Sigmoid colon (tissue), 7 donors: ENCODE measurements at regions of chrX and their contacts with region 1.

Region 1: DNA sequence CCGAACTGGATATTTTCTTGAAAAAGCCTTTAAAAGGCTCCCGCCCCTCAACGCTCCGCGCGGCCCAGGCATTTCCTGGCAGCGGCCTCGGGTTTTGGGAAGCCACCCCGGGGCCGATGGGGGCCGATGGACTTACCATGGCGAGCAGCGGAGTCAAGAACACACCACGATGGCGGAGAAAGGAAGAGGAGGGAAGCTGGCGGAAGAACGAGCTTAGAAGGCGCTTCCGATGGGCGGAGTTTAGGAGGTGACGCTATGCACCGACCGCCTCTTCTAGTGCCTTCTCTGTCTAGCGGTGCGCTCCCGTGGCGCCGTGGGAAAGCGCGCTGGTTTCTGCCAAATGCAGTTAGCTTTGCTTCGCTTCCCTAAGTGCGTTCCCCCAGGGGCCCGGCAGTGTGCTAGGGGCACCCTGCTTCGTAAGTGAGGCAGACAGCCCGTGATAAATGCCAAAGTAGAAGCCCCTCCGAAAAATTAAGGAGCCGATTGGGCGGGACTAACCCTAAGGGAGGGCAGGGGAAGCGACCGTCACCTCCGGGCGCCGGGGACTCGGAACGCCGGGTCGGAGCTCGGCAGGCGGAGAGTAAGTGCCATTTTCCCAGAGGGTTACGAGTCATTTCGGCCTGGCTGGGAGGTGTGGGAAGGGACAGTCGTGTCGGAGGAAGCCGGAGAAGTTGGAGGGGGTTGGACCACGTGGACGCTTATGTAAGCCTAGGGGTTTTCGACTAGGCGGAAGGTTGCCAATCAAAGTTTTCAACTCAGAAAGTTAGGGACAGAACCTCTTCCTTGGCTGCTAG is at the start of gene RPL39:
- DNase-seq: peak; percentile 92
- H3K4me3 ChIP-seq: peak within 1 kb of the TSS; percentile 54 to 66 (median 62)
- H3K27ac ChIP-seq: peak within 1 kb of the TSS; percentile 87 to 92 (median 90)
- H3K4me1 ChIP-seq: peaks cover 0 to 37% (median 14%) of the 10 kb centered on the region in 4 donors
- H3K27me3 ChIP-seq: no peaks in the 10 kb centered on the region
- CTCF ChIP-seq: no peak
- EP300 ChIP-seq: no peak
- POLR2A ChIP-seq: peak; percentile 29 to 37
- total RNA-seq, gene RPL39: 1,495 to 7,662 (median 5,013) TPM

Region 2: DNA sequence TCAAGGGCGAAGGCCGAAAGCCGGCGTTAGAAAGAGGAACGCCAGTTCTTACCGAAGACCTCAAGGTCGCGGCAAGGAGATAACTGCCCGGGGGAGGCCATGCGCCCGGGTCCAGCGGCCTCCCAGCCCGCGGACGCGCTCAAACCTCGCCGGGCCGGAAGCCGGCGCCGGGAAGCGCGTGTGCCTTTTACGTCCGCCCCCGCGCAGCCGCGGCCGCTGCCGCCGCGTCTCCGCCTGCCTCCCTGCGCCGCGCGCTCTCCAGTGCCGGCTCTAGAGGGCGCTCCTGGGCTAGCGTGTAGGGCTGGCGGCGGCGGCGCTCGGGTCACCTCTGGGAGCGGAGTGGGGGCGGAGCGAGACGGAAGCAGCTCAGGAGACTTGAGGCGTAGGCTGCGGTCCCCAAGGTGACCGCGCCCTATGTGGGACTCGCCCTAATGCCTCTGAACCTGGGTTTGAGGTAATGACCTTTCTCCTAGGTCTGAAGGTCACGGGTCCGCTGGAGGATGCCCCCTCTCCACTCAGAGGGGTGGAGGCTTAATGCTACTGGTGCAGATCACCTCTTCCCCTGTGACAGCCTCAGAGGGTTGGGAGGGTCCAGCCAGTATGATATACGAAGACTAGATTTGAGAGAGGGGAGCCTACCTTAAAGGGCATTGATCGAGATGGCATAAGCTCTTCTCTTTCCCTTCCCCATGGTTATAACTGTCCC is 322.6 kb before region 1 on chrX:
- intact Hi-C with region 1: loop called (anchors 2 kb)
- DNase-seq: peak; percentile 93
- H3K4me3 ChIP-seq: peak overlapping the region; percentile 73 to 80 (median 76)
- H3K27ac ChIP-seq: peak overlapping the region; percentile 96 to 99 (median 96)
- H3K4me1 ChIP-seq: peaks cover 0 to 12% (median 2%) of the 10 kb centered on the region in 4 donors
- H3K27me3 ChIP-seq: peaks cover 0 to 4% (median 0%) of the 10 kb centered on the region in 3 donors
- CTCF ChIP-seq: peak; percentile 26 to 63 (median 33)
- EP300 ChIP-seq: no peak
- POLR2A ChIP-seq: no peak

Region 3: DNA sequence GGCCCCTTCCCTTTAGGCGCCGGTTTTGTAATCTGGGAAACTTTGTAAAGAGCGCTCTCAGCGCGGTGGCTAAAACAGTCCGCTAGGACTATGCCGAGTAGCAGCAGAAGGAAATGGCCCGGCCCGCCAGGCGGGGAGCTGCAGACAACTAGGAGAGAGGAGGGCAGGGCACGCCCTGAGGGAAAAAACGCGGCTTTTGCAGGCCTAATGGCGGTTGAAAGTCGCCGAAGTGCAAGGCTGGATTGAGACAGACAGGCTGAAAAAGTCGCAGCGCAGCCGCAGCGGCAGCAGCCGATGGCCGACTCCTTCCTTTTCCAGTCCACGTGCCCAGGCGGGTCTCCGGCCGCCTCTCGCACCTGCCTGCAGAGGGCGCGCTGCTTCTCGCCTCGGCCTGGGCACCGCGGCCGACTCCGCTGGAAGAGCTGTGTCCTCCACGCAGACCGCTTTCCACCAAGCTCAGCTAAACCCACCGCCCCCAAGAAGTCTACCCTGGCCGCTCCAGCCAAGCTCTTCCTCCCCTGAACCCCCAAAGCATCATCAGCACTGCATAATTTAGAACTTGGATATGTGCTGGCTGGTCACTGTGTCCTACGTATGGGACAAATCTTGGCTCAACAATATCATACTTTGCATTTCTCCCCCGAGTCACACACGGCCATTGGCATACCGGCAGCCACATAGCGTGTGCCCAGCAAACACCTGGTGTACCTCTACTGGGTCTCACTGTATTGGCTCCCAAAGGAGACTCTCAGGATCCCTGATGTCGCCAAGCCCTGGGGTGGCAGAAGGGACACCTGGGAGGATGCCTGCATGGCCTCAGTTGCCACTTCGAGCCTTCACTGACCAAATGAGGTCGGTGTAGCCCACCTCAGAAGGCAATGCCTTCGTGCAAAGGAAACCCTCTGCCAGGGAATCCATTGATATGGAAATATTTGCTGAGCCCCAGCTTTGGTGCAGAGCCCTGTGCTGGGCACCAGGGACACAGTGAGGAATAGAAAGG is 308.9 kb before region 1 on chrX:
- intact Hi-C with region 1: no loop called
- DNase-seq: peak; percentile 74
- H3K4me3 ChIP-seq: peak overlapping the region; percentile 14 to 48 (median 44)
- H3K27ac ChIP-seq: peak overlapping the region; percentile 58 to 68 (median 63)
- H3K4me1 ChIP-seq: peaks cover 0 to 8% (median 0%) of the 10 kb centered on the region in 4 donors
- H3K27me3 ChIP-seq: no peaks in the 10 kb centered on the region
- CTCF ChIP-seq: peak; percentile 29 to 69 (median 36)
- EP300 ChIP-seq: no peak
- POLR2A ChIP-seq: no peak

Region 4: GRCh38 chrX:119693040-119693995 is 98.3 kb before region 1 on chrX and contains the start of gene SEPTIN6:
- intact Hi-C with region 1: loop called (anchors 5 kb)
- DNase-seq: peak; percentile 83
- H3K4me3 ChIP-seq: peak within 1 kb of the TSS; percentile 69 to 80 (median 78)
- H3K27ac ChIP-seq: peak within 1 kb of the TSS; percentile 86 to 93 (median 91)
- H3K4me1 ChIP-seq: peaks cover 0 to 20% (median 11%) of the 10 kb centered on the region in 4 donors
- H3K27me3 ChIP-seq: peaks cover 0 to 2% (median 0%) of the 10 kb centered on the region in 3 donors
- CTCF ChIP-seq: no peak
- EP300 ChIP-seq: peak in 1 of 4 donors; percentile 5
- POLR2A ChIP-seq: peak; percentile 41 to 76
- total RNA-seq, gene SEPTIN6: 48.2 to 103 (median 69.4) TPM

Region 5: GRCh38 chrX:119852382-119853353 is 61.0 kb after region 1 on chrX and contains the start of gene UPF3B:
- intact Hi-C with region 1: loop called (anchors 2 kb)
- DNase-seq: peak; percentile 99
- H3K4me3 ChIP-seq: peak within 1 kb of the TSS; percentile 54 to 69 (median 64)
- H3K27ac ChIP-seq: peak within 1 kb of the TSS; percentile 86 to 92 (median 86)
- H3K4me1 ChIP-seq: peaks cover 0 to 7% (median 5%) of the 10 kb centered on the region in 4 donors
- H3K27me3 ChIP-seq: no peaks in the 10 kb centered on the region
- CTCF ChIP-seq: no peak
- EP300 ChIP-seq: no peak
- POLR2A ChIP-seq: peak; percentile 33 to 42
- total RNA-seq, gene UPF3B: 6.5 to 11.4 (median 9.2) TPM

Region 6: GRCh38 chrX:119871599-119872395 is 80.2 kb after region 1 on chrX and contains the starts of genes NDUFA1 and RNF113A:
- intact Hi-C with region 1: loop called (anchors 2 kb)
- DNase-seq: peak; percentile 92
- H3K4me3 ChIP-seq: peak within 1 kb of the TSS; percentile 38 to 65 (median 61)
- H3K27ac ChIP-seq: peak within 1 kb of the TSS; percentile 91 to 96 (median 94)
- H3K4me1 ChIP-seq: peaks cover 0 to 17% (median 7%) of the 10 kb centered on the region in 4 donors
- H3K27me3 ChIP-seq: no peaks in the 10 kb centered on the region
- CTCF ChIP-seq: no peak
- EP300 ChIP-seq: peak in 1 of 4 donors; percentile 34
- POLR2A ChIP-seq: peak; percentile 67 to 76
- total RNA-seq, gene NDUFA1: 51.2 to 106 (median 76.3) TPM
- total RNA-seq, gene RNF113A: 7.2 to 15.6 (median 9.6) TPM

Region 7: DNA sequence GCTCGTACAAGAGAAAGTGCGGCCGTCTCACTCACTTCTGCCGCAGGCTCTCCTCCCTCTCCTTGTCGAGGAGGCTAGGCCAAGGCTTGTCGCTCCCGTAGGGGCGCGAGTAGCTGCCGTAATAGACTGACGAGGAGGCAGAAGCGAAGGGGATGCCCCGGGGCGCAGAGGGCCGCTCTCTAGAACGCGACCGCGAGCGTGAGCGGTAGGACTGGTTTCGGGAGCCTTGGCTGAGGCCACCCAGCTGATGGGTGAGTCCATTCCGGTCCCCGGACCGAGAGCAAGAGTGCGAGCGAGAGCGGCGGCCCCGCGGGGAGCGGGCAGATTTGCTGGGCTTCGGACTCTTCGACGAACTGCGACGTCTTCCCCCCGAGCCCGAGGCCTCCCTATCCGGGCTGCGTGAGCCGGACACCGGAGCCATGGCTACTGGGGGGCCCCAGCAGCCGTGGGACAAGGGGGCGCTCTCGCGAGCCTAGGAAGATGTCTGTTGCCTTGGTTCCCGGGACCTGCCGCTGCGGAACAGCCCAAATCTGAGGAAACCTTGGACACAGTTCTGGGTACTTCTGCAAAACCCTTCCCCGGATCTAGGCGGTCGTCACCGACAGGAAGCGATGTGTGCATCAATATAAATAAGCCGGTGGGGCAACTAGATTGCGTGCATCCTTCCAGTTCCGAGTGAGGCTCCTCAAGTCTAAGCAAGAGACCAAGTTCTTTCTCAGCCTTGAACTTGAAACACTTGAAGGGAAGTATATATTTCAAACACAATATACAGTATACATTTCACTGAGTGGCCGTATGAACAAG is 151.8 kb after region 1 on chrX and contains the start of gene NKAP:
- intact Hi-C with region 1: loop called (anchors 5 kb)
- DNase-seq: peak; percentile 90
- H3K4me3 ChIP-seq: peak within 1 kb of the TSS; percentile 63 to 72 (median 70)
- H3K27ac ChIP-seq: peak within 1 kb of the TSS; percentile 87 to 93 (median 90)
- H3K4me1 ChIP-seq: peaks cover 0 to 15% (median 9%) of the 10 kb centered on the region in 4 donors
- H3K27me3 ChIP-seq: no peaks in the 10 kb centered on the region
- CTCF ChIP-seq: no peak
- EP300 ChIP-seq: no peak
- POLR2A ChIP-seq: peak; percentile 25 to 38
- total RNA-seq, gene NKAP: 3.9 to 7.8 (median 5.5) TPM

Region 8: DNA sequence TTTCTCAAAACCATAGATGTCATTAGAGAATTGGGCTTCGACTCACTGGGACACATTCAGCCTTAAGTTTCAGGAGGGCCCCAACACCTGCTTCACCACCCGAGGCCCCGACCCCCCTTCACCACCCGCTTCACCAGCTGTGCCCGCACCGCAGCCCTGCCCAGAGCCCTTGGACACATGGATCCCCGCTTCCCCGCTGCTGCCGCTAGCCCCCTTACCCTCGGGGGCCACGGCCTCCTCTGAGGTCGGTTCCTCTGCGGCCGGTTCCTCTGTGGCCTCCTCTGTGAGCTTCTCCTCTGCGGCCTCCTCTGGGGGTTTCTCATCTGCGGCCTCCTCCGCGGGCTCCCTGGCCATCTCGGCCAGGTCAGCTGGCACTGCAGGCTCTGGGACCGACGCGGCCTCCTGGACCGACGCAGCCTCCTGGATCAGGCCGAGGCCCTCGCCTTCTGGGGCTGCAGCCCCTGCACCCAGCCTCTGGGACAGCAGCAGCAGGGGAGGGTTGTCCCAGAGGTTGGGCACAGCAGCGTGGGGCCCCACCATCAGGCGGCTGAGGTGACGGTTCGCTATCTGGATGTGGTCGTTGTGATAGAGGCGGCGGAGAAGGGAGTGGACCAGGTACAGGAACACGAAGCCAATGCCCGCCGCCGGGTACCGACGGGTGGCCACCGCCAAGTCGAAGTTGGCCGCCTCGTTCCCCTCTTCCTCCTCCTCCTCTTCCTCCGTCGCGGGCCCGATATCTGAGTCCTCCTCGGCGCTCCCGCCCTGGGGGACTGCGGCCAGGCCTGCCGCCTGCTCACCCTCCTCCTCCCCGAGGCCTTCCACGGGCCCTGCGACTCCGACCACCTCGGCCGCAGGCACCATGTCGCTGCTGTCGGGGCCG is 1083.3 kb after region 1 on chrX:
- intact Hi-C with region 1: no loop called
- DNase-seq: peak; percentile 46
- H3K4me3 ChIP-seq: no peak overlapping the region
- H3K27ac ChIP-seq: no peak overlapping the region
- H3K4me1 ChIP-seq: no peaks in the 10 kb centered on the region
- H3K27me3 ChIP-seq: no peaks in the 10 kb centered on the region
- CTCF ChIP-seq: no peak
- EP300 ChIP-seq: no peak
- POLR2A ChIP-seq: no peak